ENCODE measurements at regions of chr17 and their contacts with region 1.

Region 1: GRCh38 chr17:81027591-81028505 is 7.1 kb upstream of the BAIAP2 start:
- DNase-seq: peak; percentile 68
- H3K4me3 ChIP-seq: no peak overlapping the region
- H3K27ac ChIP-seq: no peak overlapping the region
- H3K4me1 ChIP-seq: peaks cover 0 to 21% of the 10 kb centered on the region in 2 experiments; a peak in 1 of 4 replicates
- H3K27me3 ChIP-seq: peaks cover 25% of the 10 kb centered on the region
- CTCF ChIP-seq: no peak
- EP300 ChIP-seq: no peak
- RAD21 ChIP-seq: no peak

Region 2: DNA sequence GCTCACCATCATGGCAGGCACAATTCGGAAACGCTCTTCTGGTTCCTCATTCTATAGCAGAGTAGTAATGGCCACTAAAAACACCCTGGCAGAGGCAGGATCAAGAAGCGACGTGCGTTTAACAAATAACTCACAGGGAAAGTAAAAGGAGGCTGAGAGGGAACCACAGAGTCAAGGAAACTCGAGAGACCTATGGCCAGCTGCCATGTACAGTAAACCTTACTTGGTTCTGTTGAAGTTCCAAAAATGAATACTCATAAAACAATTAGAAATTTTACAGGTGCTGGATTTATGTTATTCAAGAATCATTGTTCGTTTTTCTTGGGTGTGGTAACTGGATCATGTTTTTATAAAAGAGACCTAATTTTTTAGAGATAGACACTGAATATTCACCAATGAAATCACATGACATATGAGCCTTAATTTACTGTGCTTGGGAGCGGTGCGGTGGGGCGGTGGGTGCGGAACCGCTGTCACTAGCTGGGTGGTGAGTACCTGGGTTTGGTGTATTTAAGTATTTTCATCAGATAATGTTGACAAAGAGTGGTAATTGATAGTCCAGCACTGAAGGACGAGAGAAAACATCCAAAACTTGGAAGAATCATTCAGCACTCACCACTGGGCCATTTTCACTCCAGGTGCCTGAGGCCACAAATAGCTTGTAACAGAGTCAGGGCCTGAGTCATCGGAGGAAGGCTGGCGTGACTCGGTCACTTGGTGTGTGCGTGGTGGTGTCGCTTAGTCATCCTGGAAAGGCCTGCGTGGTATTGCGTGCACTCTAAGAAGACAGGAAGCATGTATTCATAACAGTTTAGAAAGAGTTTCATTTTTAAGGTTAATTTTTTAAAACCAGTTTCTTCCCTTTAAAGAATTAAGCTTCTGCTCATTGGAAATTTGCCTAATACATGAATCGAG is 171.6 kb before region 1 on chr17:
- CTCF ChIA-PET with region 1: no interaction called
- POLR2A ChIA-PET with region 1: no interaction called
- DNase-seq: no peak
- H3K4me3 ChIP-seq: no peak overlapping the region
- H3K27ac ChIP-seq: peak overlapping the region; percentile 47 to 87; a peak in 3 of 4 replicates
- H3K4me1 ChIP-seq: peaks cover 35 to 40% of the 10 kb centered on the region in 2 experiments
- H3K27me3 ChIP-seq: no peaks in the 10 kb centered on the region
- CTCF ChIP-seq: no peak
- EP300 ChIP-seq: peak in 1 of 2 experiments; percentile 86; a peak in 1 of 4 replicates
- RAD21 ChIP-seq: no peak

Region 3: GRCh38 chr17:81009136-81009535 is 18.7 kb before region 1 on chr17:
- CTCF ChIA-PET with region 1: interaction called, 102 read pairs
- POLR2A ChIA-PET with region 1: no interaction called
- DNase-seq: no peak
- H3K4me3 ChIP-seq: no peak overlapping the region
- H3K27ac ChIP-seq: no peak overlapping the region
- H3K4me1 ChIP-seq: no peaks in the 10 kb centered on the region; a peak in 1 of 4 replicates
- H3K27me3 ChIP-seq: peaks cover 65% of the 10 kb centered on the region
- CTCF ChIP-seq: no peak
- EP300 ChIP-seq: no peak
- RAD21 ChIP-seq: no peak

Region 4: DNA sequence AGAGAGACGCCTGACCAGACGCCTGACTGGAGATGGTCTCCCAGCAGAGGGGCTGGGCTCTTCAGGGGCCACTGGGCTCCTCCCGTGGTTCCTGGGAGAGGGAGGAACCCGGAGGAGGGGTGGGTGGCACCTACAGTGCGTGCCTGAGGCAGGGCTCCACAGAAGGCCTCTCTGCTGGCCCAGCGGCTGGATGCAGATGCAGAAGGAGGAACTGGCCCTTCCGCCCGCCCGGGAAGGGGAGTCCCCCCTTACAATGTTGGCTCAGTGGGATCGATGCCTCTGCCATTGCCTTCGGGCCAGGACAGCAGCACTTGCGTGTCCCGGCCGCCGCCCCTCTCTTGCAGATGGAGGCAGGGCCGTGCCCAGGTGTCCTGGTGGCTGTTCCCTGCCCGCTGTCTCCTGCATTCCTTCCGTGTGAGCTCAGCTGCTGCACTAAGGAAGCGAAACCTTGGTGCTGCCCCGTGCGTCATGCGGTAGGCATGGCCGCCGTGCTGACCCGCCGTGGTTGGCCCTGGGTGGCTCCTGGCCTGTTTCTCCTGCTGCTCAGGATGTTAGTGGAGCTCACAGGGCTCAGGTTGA is 22.2 kb after region 1 on chr17:
- CTCF ChIA-PET with region 1: interaction called, 96 read pairs
- POLR2A ChIA-PET with region 1: no interaction called
- DNase-seq: peak; percentile 50
- H3K4me3 ChIP-seq: no peak overlapping the region
- H3K27ac ChIP-seq: no peak overlapping the region
- H3K4me1 ChIP-seq: peaks cover 9 to 48% of the 10 kb centered on the region in 2 experiments; a peak in 3 of 4 replicates
- H3K27me3 ChIP-seq: no peaks in the 10 kb centered on the region
- CTCF ChIP-seq: no peak
- EP300 ChIP-seq: no peak
- RAD21 ChIP-seq: no peak

Region 5: DNA sequence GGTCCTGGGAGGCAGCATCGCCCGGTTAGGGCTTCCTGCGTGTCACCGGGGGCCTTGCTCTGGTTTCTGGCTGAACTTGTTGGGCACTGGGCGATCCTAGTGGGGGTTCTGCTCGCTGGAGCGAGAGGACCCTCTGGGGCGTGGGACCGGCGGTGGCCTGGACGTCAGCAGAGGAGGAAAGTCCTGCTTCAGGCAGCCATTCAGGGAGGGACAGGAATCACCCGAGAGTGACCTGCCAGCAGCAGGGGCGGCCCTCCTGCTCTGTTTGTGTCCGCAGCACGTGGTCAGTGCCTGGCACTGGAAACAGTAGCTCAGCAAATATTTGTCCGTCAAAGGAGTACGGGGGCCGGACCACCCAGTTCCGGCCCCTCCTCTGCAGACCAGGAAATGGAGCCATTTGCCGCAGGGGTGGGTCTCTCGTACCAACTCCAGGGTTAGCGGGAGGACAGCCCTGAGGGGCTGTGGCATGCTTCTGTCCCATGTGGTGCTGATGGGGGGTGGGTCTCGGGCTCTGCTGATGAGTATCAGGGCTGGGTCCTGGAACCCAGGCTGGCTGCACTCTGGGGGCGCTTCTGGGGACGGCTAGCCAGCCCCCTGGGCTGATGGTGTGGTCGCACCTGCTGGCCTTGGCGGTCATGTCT is 55.4 kb after region 1 on chr17:
- CTCF ChIA-PET with region 1: interaction called, 60 read pairs
- POLR2A ChIA-PET with region 1: no interaction called
- DNase-seq: peak; percentile 87
- H3K4me3 ChIP-seq: no peak overlapping the region
- H3K27ac ChIP-seq: peak overlapping the region in 1 of 2 experiments; percentile 40; a peak in 1 of 4 replicates
- H3K4me1 ChIP-seq: peaks cover 0 to 31% of the 10 kb centered on the region in 2 experiments; a peak in 1 of 4 replicates
- H3K27me3 ChIP-seq: no peaks in the 10 kb centered on the region
- CTCF ChIP-seq: no peak
- EP300 ChIP-seq: no peak
- RAD21 ChIP-seq: no peak

Measured in SK-N-SH (cell line).